Endothelial cell of umbilical vein (primary cell): ENCODE measurements at regions of chr15 and their contacts with region 1.

Region 1: DNA sequence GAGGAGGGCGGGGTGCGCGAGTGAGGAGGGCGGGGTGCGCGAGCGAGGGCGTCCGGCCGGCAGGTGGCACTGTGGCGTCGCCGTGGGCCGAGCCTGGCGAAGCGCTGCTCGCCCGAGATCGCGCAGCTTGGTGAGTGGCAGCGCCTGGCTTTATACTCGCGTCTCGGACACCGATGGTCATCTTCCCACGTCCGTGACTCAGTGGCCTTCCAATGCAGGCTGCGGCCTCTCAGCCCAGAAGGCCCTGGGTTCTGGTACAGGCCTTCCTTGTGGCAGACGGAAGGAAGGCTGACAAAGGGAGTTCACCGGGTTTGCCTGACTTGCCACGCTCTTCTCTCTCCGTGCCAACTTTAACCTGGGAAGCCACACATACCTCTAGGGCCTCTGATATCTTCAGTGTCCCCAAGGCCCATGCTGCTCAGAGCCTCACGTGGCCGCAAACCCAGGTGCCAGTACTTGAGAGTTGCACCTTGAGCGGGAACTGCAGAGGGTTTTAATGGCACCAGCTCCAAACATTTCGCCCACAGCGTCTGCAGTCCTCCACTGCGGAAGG is 195.3 kb upstream of the LYSMD4 start:
- DNase-seq: peak; percentile 54
- H3K4me3 ChIP-seq: peak overlapping the region in 2 of 3 experiments; percentile 17 to 61
- H3K27ac ChIP-seq: no peak overlapping the region
- H3K4me1 ChIP-seq: peaks cover 5% of the 10 kb centered on the region
- H3K27me3 ChIP-seq: peaks cover 2 to 4% of the 10 kb centered on the region in 2 experiments
- CTCF ChIP-seq: peak; percentile 31 to 57
- POLR2A ChIP-seq: no peak

Region 2: DNA sequence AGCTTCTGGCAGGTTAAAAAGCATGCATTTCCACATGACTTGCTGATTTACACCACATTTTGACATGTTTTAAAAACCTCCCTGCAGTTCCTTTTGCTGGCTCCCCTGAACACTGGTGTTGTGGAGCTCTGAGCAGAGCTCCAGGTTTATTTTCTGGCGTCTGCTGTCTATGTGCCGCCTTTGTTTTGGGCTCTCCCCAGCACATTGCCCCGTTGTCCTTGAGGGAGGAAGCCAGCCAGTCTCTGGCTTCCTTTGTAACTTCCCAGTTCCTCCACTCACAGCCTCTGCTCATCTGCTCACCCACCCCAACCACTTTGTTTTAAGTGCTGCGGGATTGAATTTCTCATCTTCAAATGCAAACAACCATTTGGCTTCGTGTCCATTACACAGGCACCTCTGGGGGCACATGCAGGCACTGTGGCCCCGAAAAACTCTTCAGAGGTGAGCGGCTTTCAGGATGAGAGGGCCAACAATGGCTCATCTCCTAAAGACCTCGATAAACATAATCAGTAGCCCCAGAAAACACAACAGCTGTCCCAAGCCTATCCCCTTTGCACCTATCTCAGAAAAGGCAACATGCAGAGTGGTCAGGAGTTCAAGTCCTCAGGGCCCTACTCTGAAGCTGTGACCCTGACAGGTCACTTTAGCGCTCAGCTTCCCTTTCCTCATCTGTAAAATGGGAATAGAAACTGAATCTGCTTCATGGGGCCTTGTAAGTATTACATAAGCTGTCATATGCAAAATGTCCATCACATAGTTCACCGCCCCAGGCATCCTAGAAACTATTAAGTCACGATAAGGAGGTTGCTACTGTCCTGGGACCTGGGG is 364.1 kb before region 1 on chr15:
- CTCF ChIA-PET with region 1: no interaction called
- POLR2A ChIA-PET with region 1: no interaction called
- dilution Hi-C with region 1: no loop called
- intact Hi-C with region 1: no loop called
- DNase-seq: peak; percentile 44
- H3K4me3 ChIP-seq: peak overlapping the region in 2 of 3 experiments; percentile 9 to 20
- H3K27ac ChIP-seq: no peak overlapping the region
- H3K4me1 ChIP-seq: peaks cover 31% of the 10 kb centered on the region
- H3K27me3 ChIP-seq: no peaks in the 10 kb centered on the region
- CTCF ChIP-seq: no peak
- POLR2A ChIP-seq: no peak

Region 3: GRCh38 chr15:99719096-99719541 is 209.4 kb before region 1 on chr15:
- CTCF ChIA-PET with region 1: no interaction called
- POLR2A ChIA-PET with region 1: no interaction called
- dilution Hi-C with region 1: no loop called
- intact Hi-C with region 1: no loop called
- DNase-seq: no peak
- H3K4me3 ChIP-seq: no peak overlapping the region
- H3K27ac ChIP-seq: no peak overlapping the region
- H3K4me1 ChIP-seq: no peaks in the 10 kb centered on the region
- H3K27me3 ChIP-seq: no peaks in the 10 kb centered on the region
- CTCF ChIP-seq: no peak
- POLR2A ChIP-seq: no peak

Region 4: GRCh38 chr15:100043015-100043641 is 114.6 kb after region 1 on chr15:
- CTCF ChIA-PET with region 1: no interaction called
- POLR2A ChIA-PET with region 1: no interaction called
- dilution Hi-C with region 1: no loop called
- intact Hi-C with region 1: loop called (anchors 2 kb)
- DNase-seq: peak; percentile 71
- H3K4me3 ChIP-seq: peak overlapping the region in 1 of 3 experiments; percentile 22
- H3K27ac ChIP-seq: peak overlapping the region; percentile 72
- H3K4me1 ChIP-seq: peaks cover 18% of the 10 kb centered on the region
- H3K27me3 ChIP-seq: no peaks in the 10 kb centered on the region
- CTCF ChIP-seq: no peak
- POLR2A ChIP-seq: no peak

Region 5: GRCh38 chr15:100131321-100132224 is 203.1 kb after region 1 on chr15:
- CTCF ChIA-PET with region 1: interaction called, 46 read pairs
- POLR2A ChIA-PET with region 1: no interaction called
- dilution Hi-C with region 1: no loop called
- intact Hi-C with region 1: loop called (anchors 2 kb)
- DNase-seq: peak; percentile 25
- H3K4me3 ChIP-seq: peak overlapping the region in 1 of 3 experiments; percentile 16
- H3K27ac ChIP-seq: no peak overlapping the region
- H3K4me1 ChIP-seq: no peaks in the 10 kb centered on the region
- H3K27me3 ChIP-seq: no peaks in the 10 kb centered on the region
- CTCF ChIP-seq: peak; percentile 34 to 52
- POLR2A ChIP-seq: no peak

Region 6: DNA sequence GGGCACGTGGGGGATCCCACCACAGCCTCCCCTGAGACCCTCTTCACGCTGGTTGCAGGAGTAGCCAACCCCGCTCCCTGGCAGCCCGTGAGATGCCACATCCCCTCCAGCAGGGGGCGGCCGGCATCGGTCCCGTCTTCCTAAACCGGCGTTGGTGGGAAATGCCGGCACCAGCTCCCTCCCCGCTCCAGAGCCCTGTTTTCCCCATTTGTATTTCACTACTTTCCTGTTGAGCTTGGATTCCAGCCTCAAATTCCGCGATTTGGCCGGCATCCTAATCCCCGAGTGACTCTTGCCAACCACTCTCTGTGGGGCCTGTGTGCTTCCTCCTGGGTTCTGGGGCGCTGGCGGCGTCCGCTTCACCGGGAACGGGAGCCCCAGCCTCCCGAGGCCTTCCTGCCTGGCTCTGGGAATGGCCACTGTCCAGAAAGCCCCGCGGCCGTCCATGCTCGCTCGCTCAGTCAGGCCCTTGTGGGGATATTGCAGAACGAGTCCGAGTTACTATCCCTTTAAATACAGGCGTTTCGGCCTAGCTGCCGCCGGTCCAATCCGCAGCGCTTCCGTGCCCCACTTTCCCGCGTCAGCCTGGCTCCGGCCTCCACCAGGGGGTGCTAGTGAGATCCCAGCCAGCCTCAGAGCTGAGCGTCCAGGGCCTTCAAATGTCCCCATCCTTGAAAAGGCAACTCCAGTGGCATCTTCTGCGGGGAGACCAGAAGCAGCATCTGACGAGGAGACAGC is 421.4 kb after region 1 on chr15:
- CTCF ChIA-PET with region 1: interaction called, 17 read pairs
- POLR2A ChIA-PET with region 1: no interaction called
- dilution Hi-C with region 1: no loop called
- intact Hi-C with region 1: no loop called
- DNase-seq: peak; percentile 81
- H3K4me3 ChIP-seq: peak overlapping the region; percentile 18 to 59 (median 55)
- H3K27ac ChIP-seq: no peak overlapping the region
- H3K4me1 ChIP-seq: no peaks in the 10 kb centered on the region
- H3K27me3 ChIP-seq: no peaks in the 10 kb centered on the region
- CTCF ChIP-seq: peak; percentile 89 to 98
- POLR2A ChIP-seq: no peak

Region 7: GRCh38 chr15:100602064-100602822 is 673.7 kb after region 1 on chr15 and contains the starts of genes ASB7 and LINS1:
- CTCF ChIA-PET with region 1: interaction called, 3 read pairs
- POLR2A ChIA-PET with region 1: no interaction called
- dilution Hi-C with region 1: no loop called
- intact Hi-C with region 1: loop called (anchors 5 kb)
- DNase-seq: peak; percentile 100
- H3K4me3 ChIP-seq: peak within 1 kb of the TSS; percentile 84 to 99 (median 96)
- H3K27ac ChIP-seq: peak within 1 kb of the TSS; percentile 71
- H3K4me1 ChIP-seq: peaks cover 21% of the 10 kb centered on the region
- H3K27me3 ChIP-seq: no peaks in the 10 kb centered on the region
- CTCF ChIP-seq: no peak
- POLR2A ChIP-seq: no peak
- total RNA-seq, gene ASB7: 13.0 and 13.3 TPM in 2 replicates
- total RNA-seq, gene LINS1: 9.6 and 14.7 TPM in 2 replicates